Breast epithelium (tissue), 4 donors: ENCODE measurements at regions of chr10 and their contacts with region 1.

Region 1: GRCh38 chr10:98567391-98568133 is 120.8 kb upstream of the HPS1 start:
- DNase-seq: no peak
- H3K4me3 ChIP-seq: no peak overlapping the region
- H3K27ac ChIP-seq: peak overlapping the region in 1 of 2 donors; percentile 12
- H3K4me1 ChIP-seq: no peaks in the 10 kb centered on the region
- H3K27me3 ChIP-seq: no peaks in the 10 kb centered on the region
- CTCF ChIP-seq: no peak
- POLR2A ChIP-seq: no peak

Region 2: DNA sequence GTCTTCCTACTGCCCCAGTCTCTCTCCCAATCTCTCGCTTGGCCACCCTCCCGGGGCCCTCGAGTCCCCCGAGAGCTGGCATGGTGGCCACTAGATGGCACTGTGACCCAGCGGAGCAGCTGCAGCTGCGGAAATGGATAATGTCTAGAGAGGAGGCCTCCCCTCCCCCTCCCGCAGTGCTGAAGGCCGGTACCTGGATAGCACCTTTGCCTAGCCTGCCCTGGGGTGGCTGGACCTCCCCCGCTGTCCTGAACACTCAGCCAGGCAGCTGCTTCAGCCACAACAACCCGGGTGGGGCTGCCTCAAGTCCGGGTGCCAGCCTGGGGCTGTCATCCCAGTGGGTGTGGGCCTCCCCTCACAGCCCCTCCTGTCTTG is 652.7 kb before region 1 on chr10:
- intact Hi-C with region 1: loop called (anchors 5 kb)
- DNase-seq: peak; percentile 74 to 76
- H3K4me3 ChIP-seq: peak overlapping the region in 1 of 3 donors; percentile 23
- H3K27ac ChIP-seq: peak overlapping the region in 1 of 2 donors; percentile 78
- H3K4me1 ChIP-seq: peaks cover 5 to 21% of the 10 kb centered on the region in 2 donors
- H3K27me3 ChIP-seq: no peaks in the 10 kb centered on the region
- CTCF ChIP-seq: peak; percentile 40 to 84 (median 82)
- POLR2A ChIP-seq: no peak

Region 3: DNA sequence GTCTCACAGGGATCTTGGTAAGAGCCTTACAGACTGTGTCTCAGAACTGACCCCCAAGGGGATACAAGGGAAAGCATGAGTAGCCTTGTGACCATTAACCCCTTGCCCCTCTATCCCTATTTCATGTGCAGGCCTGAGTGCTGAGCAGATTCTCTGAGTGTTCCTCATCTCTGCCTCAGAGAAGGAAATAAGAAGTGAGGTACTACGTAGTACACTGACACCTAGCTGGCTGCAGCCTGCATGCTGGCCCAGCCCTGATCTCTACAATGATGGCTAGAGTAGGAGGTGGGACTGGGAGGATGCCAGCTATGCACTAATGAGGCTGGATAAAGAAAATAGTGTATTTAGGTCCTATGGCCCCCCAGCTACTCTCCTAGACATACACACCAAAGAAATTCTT is 54.1 kb after region 1 on chr10:
- intact Hi-C with region 1: no loop called
- DNase-seq: no peak
- H3K4me3 ChIP-seq: no peak overlapping the region
- H3K27ac ChIP-seq: no peak overlapping the region
- H3K4me1 ChIP-seq: no peaks in the 10 kb centered on the region
- H3K27me3 ChIP-seq: no peaks in the 10 kb centered on the region
- CTCF ChIP-seq: no peak
- POLR2A ChIP-seq: no peak